ENCODE measurements at regions of chr15 and their contacts with region 1.

Region 1: GRCh38 chr15:67863442-67863987 is 23.7 kb upstream of the RNU6-1 start:
- DNase-seq: peak; percentile 57 to 65 (median 63)
- H3K4me3 ChIP-seq: peak overlapping the region in 1 of 2 donors; percentile 27
- H3K4me3 Mint-ChIP-seq: peak overlapping the region in 6 of 8 donors; percentile 25 to 64 (median 56)
- H3K27ac ChIP-seq: no peak overlapping the region
- H3K27ac Mint-ChIP-seq: no peak overlapping the region
- H3K4me1 ChIP-seq: peaks cover 10% of the 10 kb centered on the region
- H3K4me1 Mint-ChIP-seq: no peaks in the 10 kb centered on the region
- H3K27me3 ChIP-seq: no peaks in the 10 kb centered on the region
- H3K27me3 Mint-ChIP-seq: peaks cover 6 to 12% of the 10 kb centered on the region in 2 donors

Region 2: GRCh38 chr15:67873777-67874176 is 10.3 kb after region 1 on chr15:
- CTCF ChIA-PET with region 1: interaction called, 11 read pairs
- POLR2A ChIA-PET with region 1: no interaction called
- intact Hi-C with region 1: no loop called
- DNase-seq: no peak
- H3K4me3 ChIP-seq: no peak overlapping the region
- H3K4me3 Mint-ChIP-seq: no peak overlapping the region
- H3K27ac ChIP-seq: no peak overlapping the region
- H3K27ac Mint-ChIP-seq: no peak overlapping the region
- H3K4me1 ChIP-seq: no peaks in the 10 kb centered on the region
- H3K4me1 Mint-ChIP-seq: no peaks in the 10 kb centered on the region
- H3K27me3 ChIP-seq: no peaks in the 10 kb centered on the region
- H3K27me3 Mint-ChIP-seq: peaks cover 15 to 27% of the 10 kb centered on the region in 2 donors

Region 3: GRCh38 chr15:68154923-68155559 is 291.5 kb after region 1 on chr15:
- CTCF ChIA-PET with region 1: interaction called, 18 read pairs
- POLR2A ChIA-PET with region 1: no interaction called
- intact Hi-C with region 1: loop called (anchors 1 kb)
- DNase-seq: peak in 4 of 5 donors; percentile 10 to 24 (median 13)
- H3K4me3 ChIP-seq: no peak overlapping the region
- H3K4me3 Mint-ChIP-seq: no peak overlapping the region
- H3K27ac ChIP-seq: no peak overlapping the region
- H3K27ac Mint-ChIP-seq: peak overlapping the region in 1 of 7 donors; percentile 9
- H3K4me1 ChIP-seq: no peaks in the 10 kb centered on the region
- H3K4me1 Mint-ChIP-seq: peaks cover 0 to 6% (median 4%) of the 10 kb centered on the region in 4 donors
- H3K27me3 ChIP-seq: no peaks in the 10 kb centered on the region
- H3K27me3 Mint-ChIP-seq: no peaks in the 10 kb centered on the region

Region 4: GRCh38 chr15:68210821-68211655 is 347.5 kb after region 1 on chr15:
- CTCF ChIA-PET with region 1: interaction called, 9 read pairs
- POLR2A ChIA-PET with region 1: no interaction called
- intact Hi-C with region 1: loop called (anchors 1 kb)
- DNase-seq: peak in 4 of 5 donors; percentile 27 to 34 (median 30)
- H3K4me3 ChIP-seq: no peak overlapping the region
- H3K4me3 Mint-ChIP-seq: no peak overlapping the region
- H3K27ac ChIP-seq: no peak overlapping the region
- H3K27ac Mint-ChIP-seq: peak overlapping the region in 1 of 7 donors; percentile 64
- H3K4me1 ChIP-seq: peaks cover 16% of the 10 kb centered on the region
- H3K4me1 Mint-ChIP-seq: peaks cover 5 to 28% (median 16%) of the 10 kb centered on the region in 4 donors
- H3K27me3 ChIP-seq: no peaks in the 10 kb centered on the region
- H3K27me3 Mint-ChIP-seq: no peaks in the 10 kb centered on the region